Activated CD8-positive, alpha-beta memory T cell treated with anti-CD3 and anti-CD28 coated beads, Interleukin-2, amount 10 ng/mL, durations not matched to agents 7 days and 5 days (primary cell): ENCODE measurements at regions of chr9 and their contacts with region 1.

Region 1: DNA sequence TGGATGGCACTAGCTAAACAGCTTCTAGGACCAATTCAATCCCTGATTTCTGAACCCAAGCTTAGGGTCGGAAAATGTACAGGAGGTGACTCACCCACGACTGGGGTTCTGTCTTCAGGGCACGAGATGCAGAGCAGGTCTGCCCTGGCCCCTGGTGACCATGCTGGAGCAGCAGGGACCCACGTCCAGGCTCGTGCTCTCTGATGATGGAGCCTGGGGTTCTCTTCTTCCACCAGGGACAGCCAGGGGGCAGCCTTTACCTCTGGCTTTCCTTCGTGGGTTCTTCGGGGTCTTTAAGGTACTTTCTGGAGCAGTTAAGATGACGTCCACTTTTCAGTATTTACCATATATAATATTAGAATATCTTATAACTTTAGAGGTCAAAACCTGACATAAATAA is 2.1 kb downstream of the CFAP77 start:
- DNase-seq: peak; percentile 62
- ATAC-seq: peak; percentile 40
- H3K4me3 Mint-ChIP-seq: no peak overlapping the region
- H3K27ac Mint-ChIP-seq: no peak overlapping the region
- H3K4me1 Mint-ChIP-seq: peaks cover 22% of the 10 kb centered on the region
- H3K27me3 Mint-ChIP-seq: peaks cover 74% of the 10 kb centered on the region

Region 2: DNA sequence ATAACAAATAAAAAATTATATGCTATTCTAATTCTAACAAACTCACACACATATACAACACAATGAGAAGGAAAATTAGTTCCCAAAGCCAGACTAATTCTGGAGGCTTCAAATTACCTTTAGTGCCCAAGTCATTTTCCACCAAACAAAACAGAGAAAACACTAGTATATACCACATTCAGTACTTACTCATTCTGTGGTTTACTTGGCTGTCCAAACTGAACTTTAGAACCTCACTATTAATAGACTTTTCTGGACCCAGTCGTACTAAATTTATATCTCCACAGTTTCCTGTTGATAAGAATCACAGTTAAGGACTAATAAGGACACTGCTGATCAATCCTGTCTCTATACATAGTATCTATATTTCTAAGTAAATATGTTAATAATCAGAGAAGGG is 123.7 kb before region 1 on chr9:
- CTCF ChIA-PET with region 1: no interaction called
- DNase-seq: no peak
- ATAC-seq: no peak
- H3K4me3 Mint-ChIP-seq: no peak overlapping the region
- H3K27ac Mint-ChIP-seq: peak overlapping the region; percentile 61
- H3K4me1 Mint-ChIP-seq: peaks cover 24% of the 10 kb centered on the region
- H3K27me3 Mint-ChIP-seq: no peaks in the 10 kb centered on the region

Region 3: DNA sequence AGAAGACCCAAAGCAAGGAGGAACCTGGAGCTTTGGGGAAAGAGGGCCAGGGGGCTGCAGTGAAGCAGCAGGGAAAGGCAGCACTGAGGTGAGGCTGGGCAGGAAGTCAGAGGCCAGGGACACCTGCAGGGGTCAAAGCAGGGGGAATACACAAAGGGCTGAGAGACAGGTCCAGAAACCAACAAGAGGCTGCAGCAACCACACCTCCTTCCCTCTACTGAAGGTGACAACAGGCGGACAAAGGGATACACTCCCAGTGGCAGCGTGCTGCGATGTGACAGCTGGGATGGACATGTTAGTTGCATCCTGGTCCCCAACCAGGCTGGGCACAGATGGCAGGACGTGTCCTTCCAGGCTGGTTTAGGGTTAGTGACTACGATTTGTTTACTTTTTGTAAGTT is 10.5 kb after region 1 on chr9:
- CTCF ChIA-PET with region 1: interaction called, 12 read pairs
- DNase-seq: no peak
- ATAC-seq: no peak
- H3K4me3 Mint-ChIP-seq: no peak overlapping the region
- H3K27ac Mint-ChIP-seq: no peak overlapping the region
- H3K4me1 Mint-ChIP-seq: no peaks in the 10 kb centered on the region
- H3K27me3 Mint-ChIP-seq: peaks cover 80% of the 10 kb centered on the region

Region 4: GRCh38 chr9:132507746-132508469 is 95.8 kb after region 1 on chr9:
- CTCF ChIA-PET with region 1: interaction called, 18 read pairs
- DNase-seq: peak; percentile 78
- ATAC-seq: peak; percentile 75
- H3K4me3 Mint-ChIP-seq: no peak overlapping the region
- H3K27ac Mint-ChIP-seq: no peak overlapping the region
- H3K4me1 Mint-ChIP-seq: peaks cover 13% of the 10 kb centered on the region
- H3K27me3 Mint-ChIP-seq: peaks cover 30% of the 10 kb centered on the region

Region 5: DNA sequence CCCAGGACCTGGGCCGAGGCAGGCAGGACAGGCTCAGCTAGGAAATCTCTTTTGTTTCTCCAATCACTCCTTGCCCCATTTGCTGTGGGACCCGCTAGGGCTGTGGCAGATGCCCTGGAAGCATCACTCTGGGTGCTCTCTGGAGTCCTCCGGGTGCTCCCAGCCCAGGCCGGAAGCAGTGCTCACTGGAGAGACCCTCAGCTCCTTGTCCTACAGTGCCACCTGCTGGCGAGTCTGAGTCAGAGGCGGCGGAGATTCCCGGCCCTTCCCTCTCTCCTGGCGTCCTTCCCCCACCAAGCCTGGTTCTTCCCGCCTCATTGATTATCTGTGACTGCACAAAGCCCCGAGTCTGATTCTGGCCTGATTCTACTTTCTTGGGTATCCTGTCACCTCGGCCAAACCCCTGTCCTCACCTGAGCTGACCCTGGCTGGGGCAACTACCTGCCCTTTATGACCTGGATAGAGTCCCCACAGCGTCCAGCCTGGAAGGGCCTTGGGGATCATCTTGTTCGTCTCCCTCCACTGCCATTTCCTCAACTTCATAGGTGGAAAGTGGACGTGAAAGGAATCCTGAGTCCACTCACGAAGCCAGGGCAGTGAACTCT is 163.0 kb after region 1 on chr9:
- CTCF ChIA-PET with region 1: interaction called, 59 read pairs
- DNase-seq: peak; percentile 74
- ATAC-seq: peak; percentile 75
- H3K4me3 Mint-ChIP-seq: no peak overlapping the region
- H3K27ac Mint-ChIP-seq: no peak overlapping the region
- H3K4me1 Mint-ChIP-seq: no peaks in the 10 kb centered on the region
- H3K27me3 Mint-ChIP-seq: peaks cover 56% of the 10 kb centered on the region